A549 (cell line): ENCODE measurements at regions of chr10 and their contacts with region 1.

Region 1: GRCh38 chr10:48533951-48534720 is 70.7 kb downstream of the ARHGAP22 start:
- DNase-seq: no peak
- ATAC-seq: no peak
- H3K4me3 ChIP-seq: no peak overlapping the region
- H3K27ac ChIP-seq: no peak overlapping the region
- H3K4me1 ChIP-seq: no peaks in the 10 kb centered on the region
- CTCF ChIP-seq: no peak
- EP300 ChIP-seq: no peak
- POLR2A ChIP-seq: no peak
- RAD21 ChIP-seq: no peak

Region 2: DNA sequence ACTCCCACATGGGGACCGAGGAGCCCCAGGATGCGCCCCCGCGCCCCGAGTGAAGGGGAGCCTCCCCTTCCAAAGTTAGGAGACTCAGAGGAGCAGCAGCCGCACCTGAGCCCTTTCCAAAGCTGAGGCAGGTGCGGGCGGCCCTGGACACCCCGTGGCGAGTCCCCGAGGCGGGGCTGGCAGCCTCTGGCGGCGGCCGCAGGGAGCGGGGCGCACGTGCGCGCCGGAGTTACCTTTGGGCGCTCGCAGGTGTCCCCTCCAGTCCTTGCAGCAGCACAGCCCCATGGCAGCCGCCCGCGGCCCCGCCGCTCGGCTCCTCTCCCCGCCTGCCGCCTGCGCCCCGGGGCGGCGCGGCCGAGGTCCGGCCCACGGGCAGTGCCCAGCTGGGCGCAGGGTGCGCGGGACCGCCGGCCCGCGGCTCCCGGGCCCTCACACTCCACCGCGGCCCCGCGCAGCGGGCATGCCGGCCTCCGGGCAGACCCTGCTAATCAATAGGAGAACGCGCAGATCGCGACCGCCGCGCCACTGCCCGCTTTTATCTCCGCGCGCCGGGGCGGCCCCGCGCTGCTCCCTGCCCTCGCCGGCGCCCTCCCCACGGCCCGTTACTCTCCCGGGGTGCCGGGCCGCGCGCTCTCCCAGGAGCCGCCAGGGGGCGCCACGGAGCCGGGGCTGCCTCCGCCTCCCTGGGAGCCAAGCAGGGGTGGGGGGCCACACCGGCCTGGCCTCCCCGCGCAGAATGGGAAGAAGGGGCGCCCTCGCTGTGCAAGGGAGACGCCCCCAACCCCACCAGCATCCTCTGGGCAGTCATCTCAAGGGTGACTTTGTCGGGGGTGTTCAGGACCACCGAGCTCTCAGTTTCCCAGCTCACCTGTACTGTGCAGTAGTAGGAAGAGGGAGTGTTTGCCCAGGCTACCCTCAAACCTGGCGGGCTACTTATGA is 10.0 kb before region 1 on chr10:
- CTCF ChIA-PET with region 1: interaction called, 12 read pairs
- POLR2A ChIA-PET with region 1: no interaction called
- DNase-seq: peak; percentile 29 to 43
- ATAC-seq: peak; percentile 75 to 87
- H3K4me3 ChIP-seq: peak overlapping the region; percentile 50
- H3K27ac ChIP-seq: peak overlapping the region; percentile 48 to 80; a peak in 5 of 6 replicates
- H3K4me1 ChIP-seq: 0 out of 3 replicates have a peak, but pooled peaks cover 3% of the 10 kb centered on the region
- CTCF ChIP-seq: peak; percentile 72
- EP300 ChIP-seq: no peak
- POLR2A ChIP-seq: no peak
- RAD21 ChIP-seq: peak in 1 of 2 experiments; percentile 29; a peak in 1 of 5 replicates

Region 3: DNA sequence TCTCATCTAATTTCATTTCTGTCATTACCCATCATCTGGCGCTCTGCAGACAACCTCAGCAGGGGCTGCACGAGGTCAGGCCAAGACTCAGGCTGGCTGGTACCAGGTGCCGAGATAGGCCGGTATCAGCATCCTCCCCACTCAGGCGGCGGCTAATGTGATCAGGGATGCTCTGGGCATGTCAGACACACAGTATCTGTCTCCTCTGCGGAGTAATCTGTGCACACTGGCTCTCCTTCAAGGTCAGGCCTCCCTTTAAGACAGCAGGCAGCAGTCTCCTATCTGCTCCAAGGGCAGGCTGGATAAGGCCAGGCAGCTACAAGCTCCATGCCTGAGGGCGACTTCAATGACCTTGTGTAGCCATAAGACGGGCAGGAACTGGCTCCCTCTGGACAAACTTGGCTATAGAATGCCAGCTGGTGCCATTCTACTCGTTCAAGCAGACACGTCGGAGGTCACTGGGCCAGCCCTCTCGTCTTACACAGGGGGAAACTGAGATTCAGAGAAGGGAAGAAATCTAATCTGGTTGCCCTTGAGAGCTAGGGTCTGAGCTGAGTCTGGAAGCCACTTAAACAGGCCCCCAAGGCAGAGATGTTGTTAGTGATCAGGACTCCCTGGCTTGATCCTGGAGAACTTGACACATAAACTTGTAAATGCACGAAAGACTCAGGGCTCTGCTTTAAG is 11.5 kb after region 1 on chr10:
- CTCF ChIA-PET with region 1: interaction called, 16 read pairs
- POLR2A ChIA-PET with region 1: no interaction called
- DNase-seq: no peak
- ATAC-seq: no peak
- H3K4me3 ChIP-seq: no peak overlapping the region
- H3K27ac ChIP-seq: no peak overlapping the region
- H3K4me1 ChIP-seq: no peaks in the 10 kb centered on the region
- CTCF ChIP-seq: no peak
- EP300 ChIP-seq: no peak
- POLR2A ChIP-seq: no peak
- RAD21 ChIP-seq: no peak

Region 4: DNA sequence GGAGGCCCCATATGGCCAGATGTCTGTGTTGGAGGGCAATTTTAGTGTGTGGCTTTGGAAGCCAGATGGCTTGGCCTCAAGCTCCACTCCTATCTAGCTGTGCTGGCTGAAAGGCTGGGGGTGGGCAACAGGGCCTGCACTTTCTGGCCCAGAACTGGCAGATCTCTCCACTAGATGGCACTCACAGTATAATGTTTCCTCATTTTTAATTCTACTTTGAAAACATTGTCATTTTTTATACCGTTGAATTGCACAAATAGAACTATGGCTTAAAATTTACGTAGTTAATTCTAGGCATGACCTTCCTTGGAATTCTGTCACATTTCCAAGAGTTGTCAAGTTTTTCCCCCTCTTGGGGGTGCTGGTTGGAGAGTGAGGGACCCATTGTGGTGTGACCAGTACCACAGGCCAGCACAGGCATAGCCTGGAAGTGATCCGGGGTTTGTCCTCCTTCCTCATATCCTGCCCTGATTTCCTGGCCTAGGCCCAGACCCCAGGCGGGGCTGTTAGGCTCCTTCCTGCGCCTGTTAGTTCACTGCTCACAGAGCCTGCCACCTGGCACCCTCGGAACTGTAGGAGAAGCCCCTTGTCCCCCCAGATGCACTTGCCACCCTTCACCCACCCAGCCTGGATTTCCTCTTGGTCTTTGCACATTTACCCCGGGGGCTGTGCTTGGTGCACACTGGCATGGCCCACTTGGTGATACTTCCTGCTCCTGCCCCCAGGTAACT is 17.9 kb after region 1 on chr10:
- CTCF ChIA-PET with region 1: interaction called, 16 read pairs
- POLR2A ChIA-PET with region 1: no interaction called
- DNase-seq: peak; percentile 37 to 61
- ATAC-seq: peak; percentile 75 to 89
- H3K4me3 ChIP-seq: no peak overlapping the region
- H3K27ac ChIP-seq: no peak overlapping the region
- H3K4me1 ChIP-seq: no peaks in the 10 kb centered on the region
- CTCF ChIP-seq: peak; percentile 77
- EP300 ChIP-seq: no peak
- POLR2A ChIP-seq: no peak
- RAD21 ChIP-seq: peak; percentile 69 to 73